SK-N-SH (cell line): ENCODE measurements at regions of chr16 and their contacts with region 1.

Region 1: GRCh38 chr16:55661941-55662643 is 6.3 kb downstream of the SLC6A2 start:
- DNase-seq: peak; percentile 76
- H3K4me3 ChIP-seq: peak overlapping the region in 1 of 2 experiments; percentile 59; a peak in 1 of 4 replicates
- H3K27ac ChIP-seq: peak overlapping the region in 1 of 2 experiments; percentile 100; a peak in 2 of 4 replicates
- H3K4me1 ChIP-seq: peaks cover 0 to 75% of the 10 kb centered on the region in 2 experiments; a peak in 2 of 4 replicates
- H3K27me3 ChIP-seq: peaks cover 6% of the 10 kb centered on the region; the same call in 1 of the 2 replicates
- CTCF ChIP-seq: no peak
- EP300 ChIP-seq: peak in 1 of 2 experiments; percentile 89; a peak in 2 of 4 replicates
- RAD21 ChIP-seq: peak; percentile 37

Region 2: DNA sequence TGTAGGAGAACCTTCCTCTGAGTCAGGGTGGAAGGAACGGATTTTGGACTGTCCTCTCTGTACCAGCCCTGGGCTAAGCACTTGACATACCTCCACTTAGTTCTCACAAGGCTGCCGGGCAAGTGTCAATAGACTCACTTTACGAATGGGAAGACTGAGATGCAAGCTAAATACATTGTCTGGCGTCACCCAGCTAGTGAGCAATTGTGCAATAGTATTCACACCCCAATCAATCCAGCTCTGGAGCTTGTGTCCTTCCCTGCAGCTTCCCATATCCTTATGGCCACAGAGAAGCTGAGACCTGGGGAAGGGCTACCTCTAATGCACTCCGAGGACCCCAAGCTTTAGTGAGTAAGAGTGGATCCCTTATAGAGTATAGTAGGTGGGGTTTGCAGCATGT is 33.5 kb after region 1 on chr16:
- CTCF ChIA-PET with region 1: interaction called, 51 read pairs
- POLR2A ChIA-PET with region 1: interaction called, 3 read pairs
- DNase-seq: no peak
- H3K4me3 ChIP-seq: no peak overlapping the region
- H3K27ac ChIP-seq: 0 out of 4 replicates have a peak overlapping the region, but pooled peaks of 1 of the 2 experiments have one; percentile 28
- H3K4me1 ChIP-seq: peaks cover 0 to 29% of the 10 kb centered on the region in 2 experiments; a peak in 2 of 4 replicates
- H3K27me3 ChIP-seq: no peaks in the 10 kb centered on the region
- CTCF ChIP-seq: no peak
- EP300 ChIP-seq: no peak
- RAD21 ChIP-seq: no peak